CD8-positive, alpha-beta T cell (primary cell): ENCODE measurements at regions of chr1 and their contacts with region 1.

Region 1: GRCh38 chr1:88891318-88891950 is at the start of gene GTF2B:
- DNase-seq: peak; percentile 86 to 99 (median 94)
- ATAC-seq: peak; percentile 90
- H3K4me3 ChIP-seq: peak within 1 kb of the TSS; percentile 89 to 92
- H3K4me3 Mint-ChIP-seq: peak within 1 kb of the TSS; percentile 92
- H3K27ac ChIP-seq: peak within 1 kb of the TSS; percentile 92 to 93
- H3K27ac Mint-ChIP-seq: peak within 1 kb of the TSS; percentile 95
- H3K4me1 ChIP-seq: peaks cover 35% of the 10 kb centered on the region
- H3K4me1 Mint-ChIP-seq: peaks cover 45% of the 10 kb centered on the region
- H3K27me3 ChIP-seq: no peaks in the 10 kb centered on the region
- H3K27me3 Mint-ChIP-seq: no peaks in the 10 kb centered on the region
- CTCF ChIP-seq: no peak
- total RNA-seq, gene GTF2B: 85.4 to 91.3 TPM

Region 2: GRCh38 chr1:86913896-86914634 is 1977.4 kb before region 1 on chr1 and contains the start of gene SELENOF:
- CTCF ChIA-PET with region 1: no interaction called
- POLR2A ChIA-PET with region 1: no interaction called
- intact Hi-C with region 1: loop called (anchors 2 to 10 kb)
- DNase-seq: peak; percentile 97 to 100 (median 99)
- ATAC-seq: peak; percentile 85
- H3K4me3 ChIP-seq: peak within 1 kb of the TSS; percentile 91 to 99
- H3K4me3 Mint-ChIP-seq: no peak within 1 kb of the TSS
- H3K27ac ChIP-seq: peak within 1 kb of the TSS; percentile 76 to 99
- H3K27ac Mint-ChIP-seq: no peak within 1 kb of the TSS
- H3K4me1 ChIP-seq: peaks cover 35% of the 10 kb centered on the region
- H3K4me1 Mint-ChIP-seq: peaks cover 50% of the 10 kb centered on the region
- H3K27me3 ChIP-seq: no peaks in the 10 kb centered on the region
- H3K27me3 Mint-ChIP-seq: no peaks in the 10 kb centered on the region
- CTCF ChIP-seq: no peak
- total RNA-seq, gene SELENOF: 74.5 to 78.6 TPM

Region 3: GRCh38 chr1:88683541-88684481 is 207.6 kb before region 1 on chr1 and contains the start of gene PKN2:
- CTCF ChIA-PET with region 1: no interaction called
- POLR2A ChIA-PET with region 1: interaction called, 18 read pairs
- intact Hi-C with region 1: loop called (anchors 1 kb)
- DNase-seq: peak; percentile 92 to 100 (median 98)
- ATAC-seq: peak; percentile 93
- H3K4me3 ChIP-seq: peak within 1 kb of the TSS; percentile 51 to 85
- H3K4me3 Mint-ChIP-seq: peak within 1 kb of the TSS; percentile 91
- H3K27ac ChIP-seq: peak within 1 kb of the TSS; percentile 94
- H3K27ac Mint-ChIP-seq: peak within 1 kb of the TSS; percentile 96
- H3K4me1 ChIP-seq: peaks cover 32% of the 10 kb centered on the region
- H3K4me1 Mint-ChIP-seq: peaks cover 34% of the 10 kb centered on the region
- H3K27me3 ChIP-seq: no peaks in the 10 kb centered on the region
- H3K27me3 Mint-ChIP-seq: no peaks in the 10 kb centered on the region
- CTCF ChIP-seq: peak; percentile 16
- total RNA-seq, gene PKN2: 42.3 to 43.7 TPM

Region 4: GRCh38 chr1:88990426-88990825 is 99.0 kb after region 1 on chr1:
- CTCF ChIA-PET with region 1: no interaction called
- POLR2A ChIA-PET with region 1: no interaction called
- intact Hi-C with region 1: loop called in 1 of 2 experiments (anchors 1 kb)
- DNase-seq: no peak
- ATAC-seq: no peak
- H3K4me3 ChIP-seq: no peak overlapping the region
- H3K4me3 Mint-ChIP-seq: no peak overlapping the region
- H3K27ac ChIP-seq: peak overlapping the region in 1 of 2 experiments; percentile 17
- H3K27ac Mint-ChIP-seq: peak overlapping the region; percentile 77
- H3K4me1 ChIP-seq: peaks cover 22% of the 10 kb centered on the region
- H3K4me1 Mint-ChIP-seq: peaks cover 43% of the 10 kb centered on the region
- H3K27me3 ChIP-seq: no peaks in the 10 kb centered on the region
- H3K27me3 Mint-ChIP-seq: no peaks in the 10 kb centered on the region
- CTCF ChIP-seq: no peak

Region 5: DNA sequence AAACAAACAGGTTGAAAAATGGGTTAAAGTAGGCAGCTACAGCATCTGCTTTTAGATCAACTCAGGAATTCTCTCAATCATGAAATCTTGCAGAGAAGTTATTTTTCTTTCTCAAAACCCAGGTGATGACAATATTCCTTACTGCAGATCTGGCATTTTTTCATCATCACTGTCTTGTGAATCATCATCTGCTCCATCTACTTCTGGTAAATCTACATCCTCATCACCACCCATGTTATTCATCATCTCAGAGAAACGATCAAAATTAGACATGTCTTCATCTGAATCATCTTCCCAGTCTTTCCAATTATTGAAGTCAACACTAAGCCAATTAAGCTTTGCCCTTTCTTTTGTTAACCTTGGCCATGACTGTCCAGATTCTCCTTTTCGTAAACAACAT is 212.7 kb after region 1 on chr1:
- CTCF ChIA-PET with region 1: no interaction called
- POLR2A ChIA-PET with region 1: no interaction called
- intact Hi-C with region 1: no loop called
- DNase-seq: no peak
- ATAC-seq: no peak
- H3K4me3 ChIP-seq: no peak overlapping the region
- H3K4me3 Mint-ChIP-seq: no peak overlapping the region
- H3K27ac ChIP-seq: no peak overlapping the region
- H3K27ac Mint-ChIP-seq: peak overlapping the region; percentile 6
- H3K4me1 ChIP-seq: no peaks in the 10 kb centered on the region
- H3K4me1 Mint-ChIP-seq: peaks cover 3% of the 10 kb centered on the region
- H3K27me3 ChIP-seq: no peaks in the 10 kb centered on the region
- H3K27me3 Mint-ChIP-seq: no peaks in the 10 kb centered on the region
- CTCF ChIP-seq: no peak

Region 6: DNA sequence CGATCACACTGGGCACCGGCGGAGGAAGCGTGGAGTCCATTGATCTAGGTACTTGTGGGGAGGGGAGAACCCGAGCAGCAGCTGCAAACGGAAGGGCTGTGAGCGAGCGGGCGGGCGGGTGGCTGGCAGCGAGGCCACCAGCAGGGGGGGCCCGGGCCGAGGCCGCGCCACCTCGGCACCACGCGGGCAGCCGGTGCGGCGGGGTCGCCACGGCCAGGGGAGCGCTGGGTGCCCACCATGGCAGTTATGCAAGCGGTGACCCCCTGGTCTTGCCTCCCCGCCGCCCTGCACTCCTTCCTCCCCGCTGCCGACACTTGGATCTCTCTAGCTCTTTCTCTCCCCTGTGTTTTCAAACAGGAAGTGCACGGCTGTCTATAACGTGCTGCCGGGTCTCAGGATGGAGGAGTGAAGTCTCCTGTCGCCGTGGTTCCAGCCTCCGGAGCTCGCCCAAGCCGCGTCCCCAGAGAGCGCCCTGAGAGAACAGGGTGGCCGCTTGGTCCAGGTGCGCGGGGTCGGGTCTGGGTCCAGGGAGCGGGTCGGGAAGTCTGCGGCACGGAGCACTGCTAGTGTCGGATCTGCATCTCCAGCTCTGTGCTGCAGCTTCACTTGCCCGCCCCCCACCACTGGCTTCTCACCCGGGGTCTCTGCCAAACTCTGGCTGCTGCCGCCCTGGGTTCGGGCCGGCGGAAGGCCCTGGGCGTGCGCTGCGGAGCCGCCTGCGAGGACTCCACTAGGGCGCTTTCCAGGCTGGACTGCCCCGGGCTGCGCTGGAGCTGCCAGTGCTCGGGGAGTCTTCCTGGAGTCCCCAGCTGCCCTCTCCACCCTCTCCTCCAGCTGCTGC is 952.1 kb after region 1 on chr1:
- CTCF ChIA-PET with region 1: no interaction called
- POLR2A ChIA-PET with region 1: no interaction called
- intact Hi-C with region 1: loop called in 1 of 2 experiments (anchors 10 kb)
- DNase-seq: peak; percentile 55 to 89 (median 77)
- ATAC-seq: peak; percentile 77
- H3K4me3 ChIP-seq: peak overlapping the region; percentile 79 to 92
- H3K4me3 Mint-ChIP-seq: peak overlapping the region; percentile 97
- H3K27ac ChIP-seq: peak overlapping the region; percentile 56 to 75
- H3K27ac Mint-ChIP-seq: peak overlapping the region; percentile 92
- H3K4me1 ChIP-seq: peaks cover 36% of the 10 kb centered on the region
- H3K4me1 Mint-ChIP-seq: peaks cover 53% of the 10 kb centered on the region
- H3K27me3 ChIP-seq: no peaks in the 10 kb centered on the region
- H3K27me3 Mint-ChIP-seq: no peaks in the 10 kb centered on the region
- CTCF ChIP-seq: peak; percentile 79

Region 7: DNA sequence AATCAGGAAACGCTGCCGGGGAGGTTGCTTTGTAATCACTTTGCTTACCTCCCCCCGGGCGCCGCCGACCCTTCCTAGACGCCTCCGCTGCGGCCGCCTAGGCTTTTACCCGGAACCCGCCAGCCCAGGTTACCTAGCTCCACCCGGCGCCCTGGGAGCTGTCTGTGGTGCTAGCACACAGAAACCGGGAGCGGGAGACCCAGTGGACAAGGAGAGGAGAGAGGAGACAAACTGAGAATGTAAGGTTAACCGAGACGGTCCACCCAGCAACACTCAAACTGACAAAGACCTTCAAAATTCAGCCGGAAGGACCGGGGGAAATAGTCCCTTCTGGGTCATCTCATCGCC is 1815.9 kb after region 1 on chr1:
- CTCF ChIA-PET with region 1: no interaction called
- POLR2A ChIA-PET with region 1: no interaction called
- intact Hi-C with region 1: no loop called
- DNase-seq: peak in 2 of 9 experiments; percentile 31 to 50
- ATAC-seq: peak; percentile 34
- H3K4me3 ChIP-seq: no peak overlapping the region
- H3K4me3 Mint-ChIP-seq: no peak overlapping the region
- H3K27ac ChIP-seq: no peak overlapping the region
- H3K27ac Mint-ChIP-seq: no peak overlapping the region
- H3K4me1 ChIP-seq: peaks cover 10% of the 10 kb centered on the region
- H3K4me1 Mint-ChIP-seq: peaks cover 10% of the 10 kb centered on the region
- H3K27me3 ChIP-seq: peaks cover 27 to 41% of the 10 kb centered on the region in 2 experiments
- H3K27me3 Mint-ChIP-seq: peaks cover 77% of the 10 kb centered on the region
- CTCF ChIP-seq: no peak